ENCODE measurements at regions of chr6 and their contacts with region 1.

Region 1: GRCh38 chr6:72411872-72412708 is 209.8 kb upstream of the KCNQ5 start:
- DNase-seq: peak; percentile 44 to 79
- ATAC-seq: peak; percentile 90 to 98 (median 94)
- H3K4me3 ChIP-seq: no peak overlapping the region
- H3K27ac ChIP-seq: no peak overlapping the region
- H3K4me1 ChIP-seq: no peaks in the 10 kb centered on the region
- H3K27me3 ChIP-seq: no peaks in the 10 kb centered on the region
- CTCF ChIP-seq: peak; percentile 100

Region 2: DNA sequence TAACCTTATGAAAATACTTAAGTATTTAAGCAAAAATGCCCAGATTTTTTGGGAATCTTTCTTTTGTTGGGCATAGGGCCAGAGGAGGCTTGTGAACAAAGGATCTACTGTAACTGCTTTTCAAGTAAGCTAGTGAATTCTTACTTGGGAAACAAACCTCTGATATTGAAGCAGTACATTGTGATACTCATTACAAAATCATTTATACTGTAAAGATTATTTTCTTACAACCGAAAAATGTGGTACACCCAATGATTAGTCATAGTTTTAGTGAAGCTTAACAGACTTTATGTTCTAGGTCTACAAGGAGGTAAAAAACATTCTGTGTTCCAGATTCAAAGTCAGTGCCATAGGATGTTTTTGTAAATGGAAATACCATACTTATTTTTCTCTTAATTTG is 63.2 kb before region 1 on chr6:
- intact Hi-C with region 1: no loop called
- DNase-seq: no peak
- ATAC-seq: no peak
- H3K4me3 ChIP-seq: no peak overlapping the region
- H3K27ac ChIP-seq: no peak overlapping the region
- H3K4me1 ChIP-seq: no peaks in the 10 kb centered on the region
- H3K27me3 ChIP-seq: no peaks in the 10 kb centered on the region
- CTCF ChIP-seq: no peak

Region 3: DNA sequence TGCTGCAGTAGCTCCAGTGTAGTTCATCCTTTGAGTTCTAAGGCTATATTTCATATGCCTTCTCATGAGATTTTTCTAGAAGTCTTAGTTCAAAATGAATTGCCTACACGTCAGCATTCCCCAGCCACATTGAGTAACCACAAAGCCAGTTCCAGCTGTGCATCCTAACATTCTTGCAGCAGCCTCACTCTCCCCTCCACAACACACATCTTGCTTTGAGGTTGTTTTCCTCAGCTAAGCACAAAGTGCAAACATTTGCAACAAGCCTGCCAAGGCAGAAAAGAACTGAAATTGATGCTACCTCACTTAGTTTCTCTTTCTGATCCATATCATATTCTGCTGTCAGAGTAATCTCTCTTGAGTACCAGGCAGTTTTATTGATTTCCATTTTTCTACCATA is 49.1 kb after region 1 on chr6:
- intact Hi-C with region 1: no loop called
- DNase-seq: no peak
- ATAC-seq: no peak
- H3K4me3 ChIP-seq: no peak overlapping the region
- H3K27ac ChIP-seq: no peak overlapping the region
- H3K4me1 ChIP-seq: no peaks in the 10 kb centered on the region
- H3K27me3 ChIP-seq: peaks cover 0 to 1% (median 0%) of the 10 kb centered on the region in 3 donors
- CTCF ChIP-seq: no peak

Region 4: DNA sequence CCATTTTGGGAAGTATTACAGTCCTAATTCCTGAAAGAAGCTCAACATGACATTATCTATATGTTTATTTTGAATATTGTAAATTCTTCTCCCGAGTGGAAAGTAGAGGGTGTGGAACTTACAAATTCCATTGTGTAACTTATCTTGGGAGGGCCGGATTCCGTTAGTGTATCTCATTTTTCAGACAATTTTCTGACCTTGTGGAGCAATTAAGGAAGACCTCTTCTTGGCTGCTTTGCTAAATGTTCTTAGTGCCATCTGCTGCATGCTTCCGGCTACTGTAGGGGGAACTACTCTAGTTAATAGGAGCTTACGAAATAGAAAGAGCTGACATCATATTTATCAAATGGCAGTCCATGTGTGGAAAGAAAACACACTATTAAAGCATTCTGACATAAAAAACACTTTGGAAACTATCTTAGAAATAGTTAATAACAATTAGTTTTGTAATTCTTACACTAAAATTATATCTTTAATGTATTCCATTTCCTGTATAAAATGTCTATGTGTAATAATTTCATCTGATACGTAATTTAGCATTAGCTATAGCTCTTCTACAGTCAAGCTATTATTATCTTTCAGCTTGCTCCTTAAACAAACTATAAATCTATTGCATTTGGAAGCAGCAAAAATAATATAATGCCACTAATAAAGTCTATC is 168.3 kb after region 1 on chr6:
- intact Hi-C with region 1: loop called in 1 of 2 experiments (anchors 10 kb)
- DNase-seq: no peak
- ATAC-seq: peak in 1 of 4 donors; percentile 62
- H3K4me3 ChIP-seq: no peak overlapping the region
- H3K27ac ChIP-seq: no peak overlapping the region
- H3K4me1 ChIP-seq: no peaks in the 10 kb centered on the region
- H3K27me3 ChIP-seq: no peaks in the 10 kb centered on the region
- CTCF ChIP-seq: peak; percentile 30

Region 5: GRCh38 chr6:73129653-73130443 is 717.8 kb after region 1 on chr6:
- intact Hi-C with region 1: loop called (anchors 2 to 5 kb)
- DNase-seq: peak; percentile 76 to 89
- ATAC-seq: peak; percentile 82 to 93 (median 88)
- H3K4me3 ChIP-seq: peak overlapping the region; percentile 43
- H3K27ac ChIP-seq: peak overlapping the region; percentile 60
- H3K4me1 ChIP-seq: peaks cover 12% of the 10 kb centered on the region
- H3K27me3 ChIP-seq: no peaks in the 10 kb centered on the region
- CTCF ChIP-seq: peak; percentile 91

Region 6: GRCh38 chr6:73180763-73181619 is 768.9 kb after region 1 on chr6:
- intact Hi-C with region 1: loop called (anchors 5 kb)
- DNase-seq: no peak
- ATAC-seq: peak; percentile 75 to 95 (median 88)
- H3K4me3 ChIP-seq: peak overlapping the region; percentile 42
- H3K27ac ChIP-seq: peak overlapping the region; percentile 30
- H3K4me1 ChIP-seq: peaks cover 10% of the 10 kb centered on the region
- H3K27me3 ChIP-seq: no peaks in the 10 kb centered on the region
- CTCF ChIP-seq: peak; percentile 77

Region 7: DNA sequence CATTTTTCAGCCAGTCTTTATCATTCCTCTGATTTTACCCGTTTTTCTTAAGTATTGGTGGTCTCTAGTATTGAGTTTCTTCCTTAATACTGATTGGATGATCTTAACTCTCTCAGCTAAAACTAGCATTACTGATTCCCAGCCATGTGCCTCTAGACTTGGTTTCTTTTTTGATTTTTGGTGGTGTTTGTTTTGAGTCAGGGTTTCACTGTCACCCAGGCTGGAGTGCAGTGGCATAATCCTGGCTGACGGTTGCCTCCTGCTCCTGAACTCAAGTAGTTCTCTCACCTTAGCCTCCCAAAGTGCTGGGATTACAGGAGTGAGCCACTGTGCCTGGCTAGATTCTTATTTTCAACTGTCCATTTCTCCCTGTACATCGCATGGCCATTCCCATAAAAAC is 917.1 kb after region 1 on chr6:
- intact Hi-C with region 1: loop called in 1 of 2 experiments (anchors 10 kb)
- DNase-seq: no peak
- ATAC-seq: no peak
- H3K4me3 ChIP-seq: no peak overlapping the region
- H3K27ac ChIP-seq: no peak overlapping the region
- H3K4me1 ChIP-seq: no peaks in the 10 kb centered on the region
- H3K27me3 ChIP-seq: no peaks in the 10 kb centered on the region
- CTCF ChIP-seq: no peak

Measured in psoas muscle (tissue), 8 donors.